ENCODE measurements at regions of chr3 and their contacts with region 1.

Region 1: DNA sequence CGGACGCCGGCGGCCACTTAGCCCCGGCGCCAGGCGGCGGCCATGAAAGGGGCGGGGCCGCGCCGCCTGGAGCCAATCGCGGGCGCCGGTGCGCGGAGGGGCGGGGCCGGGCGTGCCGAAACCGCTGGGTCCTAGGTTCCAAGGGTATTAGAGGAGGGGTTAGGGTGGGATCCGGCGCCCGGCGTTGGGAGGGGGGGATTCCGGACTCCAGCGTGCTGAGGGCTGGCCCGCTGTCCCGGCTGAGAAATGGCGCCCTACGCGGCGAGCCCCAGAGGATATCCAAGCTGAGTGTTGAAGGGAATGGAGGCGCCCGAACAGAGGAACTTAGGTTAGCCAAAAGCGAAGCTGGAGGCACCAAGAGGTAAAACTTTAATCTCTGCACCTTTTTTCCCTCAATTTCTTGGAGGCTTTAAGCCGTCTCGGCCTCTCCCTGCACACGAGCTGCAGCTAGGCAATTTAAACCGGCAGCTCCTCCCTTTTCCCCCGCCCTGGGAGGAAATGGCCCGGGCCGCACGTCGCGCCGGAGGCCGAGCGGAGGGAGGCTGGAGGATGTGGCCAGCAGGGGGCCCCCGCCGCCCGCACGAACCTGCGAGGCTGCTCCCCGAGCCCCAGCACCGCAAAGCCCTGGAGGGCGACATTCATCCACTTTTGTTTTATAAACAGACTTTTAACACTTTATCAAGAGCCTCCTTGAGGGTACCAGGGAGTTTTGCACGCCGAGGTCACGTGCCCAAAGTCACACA is at the start of gene XXYLT1:
- DNase-seq: peak; percentile 93
- ATAC-seq: peak; percentile 85
- H3K4me3 Mint-ChIP-seq: peak within 1 kb of the TSS; percentile 85
- H3K27ac Mint-ChIP-seq: peak within 1 kb of the TSS; percentile 87
- H3K4me1 Mint-ChIP-seq: peaks cover 16% of the 10 kb centered on the region
- H3K27me3 Mint-ChIP-seq: no peaks in the 10 kb centered on the region
- CTCF ChIP-seq: peak; percentile 88
- total RNA-seq, gene XXYLT1: 8.4 to 9.6 TPM

Region 2: DNA sequence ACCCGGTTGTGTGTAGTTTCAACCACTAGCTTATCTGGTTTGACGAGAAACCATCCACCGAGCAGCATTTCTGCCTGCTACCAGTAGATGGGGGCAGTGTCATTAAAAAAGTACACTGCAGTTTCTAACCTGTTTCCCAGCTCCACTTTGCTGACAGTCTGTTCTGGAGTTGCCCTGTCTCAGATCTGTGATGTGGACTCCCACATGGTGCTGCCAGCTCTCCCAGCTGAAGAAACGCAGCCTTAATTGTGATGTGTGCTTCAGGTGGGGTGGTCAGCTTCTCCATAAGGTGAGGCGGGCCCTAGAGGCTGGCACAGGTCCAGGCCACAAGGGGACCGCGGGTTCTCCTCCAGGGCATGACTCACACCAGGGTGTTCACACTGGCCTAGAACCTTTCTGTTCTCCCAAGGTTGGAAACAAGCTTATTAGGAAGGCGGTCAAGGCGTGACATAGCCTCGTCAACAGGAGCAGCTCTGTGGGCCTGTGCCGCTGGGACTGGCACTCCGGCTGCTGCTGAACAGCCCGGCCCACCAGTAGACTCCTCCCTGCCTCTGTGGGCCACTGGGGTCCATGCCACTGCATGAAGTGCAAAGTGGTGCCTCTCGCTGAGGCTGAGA is 588.5 kb before region 1 on chr3:
- CTCF ChIA-PET with region 1: interaction called, 18 read pairs
- POLR2A ChIA-PET with region 1: no interaction called
- intact Hi-C with region 1: no loop called
- DNase-seq: peak; percentile 84
- ATAC-seq: peak; percentile 68
- H3K4me3 Mint-ChIP-seq: no peak overlapping the region
- H3K27ac Mint-ChIP-seq: no peak overlapping the region
- H3K4me1 Mint-ChIP-seq: peaks cover 34% of the 10 kb centered on the region
- H3K27me3 Mint-ChIP-seq: peaks cover 16% of the 10 kb centered on the region
- CTCF ChIP-seq: peak; percentile 85

Region 3: GRCh38 chr3:195286115-195286872 is 15.0 kb after region 1 on chr3:
- CTCF ChIA-PET with region 1: interaction called, 58 read pairs
- POLR2A ChIA-PET with region 1: interaction called, 3 read pairs
- intact Hi-C with region 1: no loop called
- DNase-seq: no peak
- ATAC-seq: no peak
- H3K4me3 Mint-ChIP-seq: no peak overlapping the region
- H3K27ac Mint-ChIP-seq: no peak overlapping the region
- H3K4me1 Mint-ChIP-seq: peaks cover 13% of the 10 kb centered on the region
- H3K27me3 Mint-ChIP-seq: no peaks in the 10 kb centered on the region
- CTCF ChIP-seq: no peak

Region 4: GRCh38 chr3:195508185-195508584 is 236.9 kb after region 1 on chr3:
- CTCF ChIA-PET with region 1: interaction called, 64 read pairs
- POLR2A ChIA-PET with region 1: interaction called, 5 read pairs
- intact Hi-C with region 1: no loop called
- DNase-seq: no peak
- ATAC-seq: no peak
- H3K4me3 Mint-ChIP-seq: no peak overlapping the region
- H3K27ac Mint-ChIP-seq: peak overlapping the region; percentile 79
- H3K4me1 Mint-ChIP-seq: peaks cover 21% of the 10 kb centered on the region
- H3K27me3 Mint-ChIP-seq: no peaks in the 10 kb centered on the region
- CTCF ChIP-seq: no peak

Region 5: DNA sequence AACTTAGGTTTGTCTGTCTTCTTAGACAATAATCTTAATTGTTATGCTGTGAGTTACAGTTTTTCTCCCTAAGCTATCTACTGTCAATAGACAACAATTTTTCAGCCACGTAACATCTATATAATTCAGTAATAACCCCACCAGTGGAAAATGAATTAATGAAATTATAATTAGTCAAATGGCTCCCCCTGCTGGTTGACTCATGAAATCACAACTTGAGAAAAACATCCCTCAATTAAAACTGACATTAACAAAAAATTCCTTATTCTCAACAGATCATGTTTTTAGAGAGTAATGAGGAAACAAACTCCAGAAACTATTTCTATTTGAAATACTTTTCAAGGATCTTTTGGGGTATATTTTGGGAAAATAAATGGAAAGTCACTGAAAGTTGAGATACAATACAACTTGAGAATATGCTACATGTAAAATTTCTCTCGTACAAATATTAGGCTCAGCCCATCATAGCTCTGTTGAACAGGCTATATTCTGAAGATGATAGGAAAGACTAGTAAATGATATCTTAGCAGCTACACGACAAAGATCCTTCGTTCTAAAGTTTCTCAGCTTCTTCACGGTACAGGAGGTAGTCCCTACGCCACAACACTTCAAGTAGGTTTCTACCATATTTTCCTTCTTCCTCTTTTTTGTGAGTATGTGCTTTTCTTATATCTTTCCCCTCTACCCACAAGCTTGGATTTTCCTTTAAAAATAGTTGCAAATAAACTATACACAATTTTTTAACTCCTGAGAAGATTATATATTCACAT is 251.2 kb after region 1 on chr3:
- CTCF ChIA-PET with region 1: interaction called, 256 read pairs
- POLR2A ChIA-PET with region 1: interaction called, 16 read pairs
- intact Hi-C with region 1: loop called (anchors 2 kb)
- DNase-seq: no peak
- ATAC-seq: no peak
- H3K4me3 Mint-ChIP-seq: no peak overlapping the region
- H3K27ac Mint-ChIP-seq: peak overlapping the region; percentile 40
- H3K4me1 Mint-ChIP-seq: peaks cover 39% of the 10 kb centered on the region
- H3K27me3 Mint-ChIP-seq: no peaks in the 10 kb centered on the region
- CTCF ChIP-seq: peak; percentile 93

Region 6: DNA sequence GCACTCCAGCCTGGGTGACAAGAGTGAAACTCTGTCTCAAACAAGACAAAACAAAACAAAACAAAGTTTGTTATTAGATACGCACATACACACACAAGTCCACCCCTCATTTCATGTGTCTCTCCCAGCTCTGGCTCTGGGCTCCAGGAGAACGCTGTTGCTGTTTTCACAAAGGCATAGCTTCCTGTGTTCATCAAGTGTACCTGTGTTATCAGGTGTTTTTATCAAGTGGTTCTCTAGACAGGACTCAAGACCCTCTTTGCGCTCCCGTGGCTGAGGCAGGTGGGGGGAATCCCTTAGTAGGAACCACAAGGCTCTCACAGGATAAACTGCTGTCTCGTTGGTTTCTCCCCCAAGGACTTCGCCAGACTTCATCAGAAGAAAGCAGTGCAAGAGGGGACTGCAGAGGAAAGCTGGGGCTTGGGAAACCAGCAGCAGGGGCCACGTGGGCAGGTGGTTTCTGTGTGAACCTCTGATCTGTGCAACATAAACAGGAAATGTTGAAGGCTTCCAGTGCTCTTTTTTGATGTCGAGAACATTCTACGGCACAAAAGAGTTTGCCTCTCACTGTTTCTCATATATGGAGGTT is 278.7 kb after region 1 on chr3:
- CTCF ChIA-PET with region 1: interaction called, 21 read pairs
- POLR2A ChIA-PET with region 1: interaction called, 3 read pairs
- intact Hi-C with region 1: no loop called
- DNase-seq: peak; percentile 90
- ATAC-seq: peak; percentile 75
- H3K4me3 Mint-ChIP-seq: peak overlapping the region; percentile 60
- H3K27ac Mint-ChIP-seq: peak overlapping the region; percentile 93
- H3K4me1 Mint-ChIP-seq: peaks cover 74% of the 10 kb centered on the region
- H3K27me3 Mint-ChIP-seq: no peaks in the 10 kb centered on the region
- CTCF ChIP-seq: no peak